ENCODE measurements at regions of chr19 and their contacts with region 1.

Region 1: DNA sequence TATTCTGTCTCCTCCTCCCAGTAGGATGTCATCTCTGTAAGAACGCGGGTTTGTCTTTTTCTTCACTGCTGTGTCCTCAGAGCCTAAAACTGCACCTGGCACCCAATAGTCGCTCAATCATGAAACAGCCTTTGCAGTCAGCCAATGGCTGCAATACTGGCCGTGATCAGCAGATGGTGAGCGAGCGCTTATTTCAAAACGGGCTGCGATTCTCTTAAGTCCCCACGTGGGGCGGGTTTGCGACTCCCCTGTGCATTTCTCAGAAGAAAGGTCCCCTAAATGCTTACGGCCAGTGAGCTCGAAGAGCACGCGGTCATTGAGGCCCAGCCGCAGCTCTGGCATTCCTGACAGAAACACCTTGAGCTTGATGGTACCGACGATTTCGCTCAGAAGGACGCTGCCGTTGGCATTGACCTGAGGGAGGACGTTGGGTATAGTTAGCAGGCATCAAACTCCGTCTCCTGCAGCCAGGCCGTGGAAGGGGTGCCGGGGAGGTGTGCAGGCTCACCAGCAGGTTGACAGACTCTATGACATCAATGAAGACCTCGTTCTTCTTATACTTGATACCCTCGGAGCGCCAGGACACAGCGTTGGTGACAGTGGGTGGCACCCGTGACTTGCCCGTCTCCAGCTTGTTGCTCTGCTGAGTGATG is 6.0 kb downstream of the AP1M2 start:
- DNase-seq: peak; percentile 82
- CTCF ChIP-seq: peak; percentile 99

Region 2: DNA sequence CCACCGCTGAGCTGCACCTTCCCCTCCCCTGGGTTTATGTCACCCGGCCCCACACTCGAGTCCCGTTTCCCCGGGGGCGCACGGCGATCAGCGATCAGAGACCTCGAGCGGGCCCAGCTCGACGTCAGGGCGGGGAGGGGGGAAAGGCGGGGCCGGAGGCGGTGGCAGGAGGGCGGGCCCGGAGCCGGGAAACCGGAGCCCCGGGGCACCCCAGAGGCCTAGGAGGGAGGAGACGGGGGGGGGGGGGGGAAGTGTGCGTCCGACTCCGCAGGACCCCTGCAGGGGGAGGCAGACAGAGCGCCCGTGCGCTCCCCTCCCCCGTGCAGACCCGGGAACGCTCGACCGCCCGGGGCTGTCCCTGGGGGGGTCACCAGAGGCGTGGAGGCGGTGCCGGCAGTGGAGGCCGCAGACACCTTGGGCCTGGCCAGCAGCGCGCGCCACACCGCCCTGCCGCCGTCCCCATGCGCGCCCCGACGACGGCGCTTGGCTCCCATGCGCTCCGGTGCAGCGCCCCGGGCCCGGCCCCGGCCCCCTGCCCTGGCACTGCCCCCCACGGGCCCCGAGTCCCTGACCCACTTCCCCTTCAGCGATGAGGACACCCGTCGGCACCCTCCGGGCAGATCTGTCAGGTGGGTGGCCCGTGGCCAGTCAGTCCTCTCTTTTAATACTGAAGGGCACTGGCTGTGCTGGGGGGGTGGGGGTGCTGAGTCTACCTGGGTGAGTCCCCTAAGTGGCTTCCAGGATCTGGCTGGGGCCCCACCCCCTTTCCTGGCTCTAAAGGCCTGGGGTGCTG is 149.0 kb before region 1 on chr19:
- in situ Hi-C with region 1: no loop called
- DNase-seq: peak; percentile 86
- CTCF ChIP-seq: no peak

Region 3: GRCh38 chr19:10644260-10645007 is 63.3 kb after region 1 on chr19:
- in situ Hi-C with region 1: loop called (anchors 5 kb)
- DNase-seq: peak; percentile 90
- CTCF ChIP-seq: peak; percentile 95